Ascending aorta (tissue), 2 donors: ENCODE measurements at regions of chr6 and their contacts with region 1.

Region 1: DNA sequence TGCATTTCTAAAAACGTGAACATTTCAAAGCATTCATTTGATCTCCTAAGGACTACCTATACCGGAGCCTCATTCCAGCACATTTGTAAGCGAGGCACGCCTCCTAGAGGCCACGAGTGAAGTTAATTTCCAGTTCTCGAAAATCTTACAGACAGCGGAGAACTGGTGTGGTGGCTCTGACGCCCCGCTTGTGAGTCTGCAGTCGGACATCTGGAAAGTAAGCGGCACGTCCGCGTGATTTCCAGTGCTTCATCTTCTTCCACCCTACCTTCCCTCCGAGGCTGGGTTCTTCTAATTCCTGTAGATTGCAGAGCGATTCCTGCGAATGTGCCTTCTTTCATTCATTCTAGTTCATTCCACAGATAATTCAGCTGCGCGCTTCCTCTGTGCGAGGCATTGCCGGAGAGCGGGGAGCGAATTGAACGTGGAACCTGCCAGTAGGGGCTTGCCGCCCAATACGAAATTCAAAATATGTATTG is 810 bp upstream of the PRIM2 start:
- DNase-seq: peak; percentile 23 to 93
- H3K4me3 ChIP-seq: peak overlapping the region; percentile 58 to 70
- H3K27ac ChIP-seq: peak overlapping the region; percentile 49 to 89
- H3K4me1 ChIP-seq: peaks cover 3 to 25% of the 10 kb centered on the region in 2 donors
- H3K27me3 ChIP-seq: no peaks in the 10 kb centered on the region
- CTCF ChIP-seq: peak; percentile 61 to 84 (median 82)

Region 2: GRCh38 chr6:56851541-56852259 is 464.9 kb before region 1 on chr6:
- intact Hi-C with region 1: loop called (anchors 5 kb)
- DNase-seq: peak in 1 of 2 donors; percentile 77
- H3K4me3 ChIP-seq: peak overlapping the region; percentile 66 to 73
- H3K27ac ChIP-seq: peak overlapping the region; percentile 67 to 69
- H3K4me1 ChIP-seq: peaks cover 0 to 9% of the 10 kb centered on the region in 2 donors
- H3K27me3 ChIP-seq: no peaks in the 10 kb centered on the region
- CTCF ChIP-seq: peak; percentile 42 to 75 (median 69)

Region 3: GRCh38 chr6:56955171-56956045 is 361.2 kb before region 1 on chr6:
- intact Hi-C with region 1: loop called (anchors 1 kb)
- DNase-seq: peak; percentile 36 to 89
- H3K4me3 ChIP-seq: peak overlapping the region; percentile 61 to 75
- H3K27ac ChIP-seq: peak overlapping the region; percentile 46 to 52
- H3K4me1 ChIP-seq: peaks cover 0 to 3% of the 10 kb centered on the region in 2 donors
- H3K27me3 ChIP-seq: no peaks in the 10 kb centered on the region
- CTCF ChIP-seq: peak; percentile 61 to 80 (median 68)

Region 4: DNA sequence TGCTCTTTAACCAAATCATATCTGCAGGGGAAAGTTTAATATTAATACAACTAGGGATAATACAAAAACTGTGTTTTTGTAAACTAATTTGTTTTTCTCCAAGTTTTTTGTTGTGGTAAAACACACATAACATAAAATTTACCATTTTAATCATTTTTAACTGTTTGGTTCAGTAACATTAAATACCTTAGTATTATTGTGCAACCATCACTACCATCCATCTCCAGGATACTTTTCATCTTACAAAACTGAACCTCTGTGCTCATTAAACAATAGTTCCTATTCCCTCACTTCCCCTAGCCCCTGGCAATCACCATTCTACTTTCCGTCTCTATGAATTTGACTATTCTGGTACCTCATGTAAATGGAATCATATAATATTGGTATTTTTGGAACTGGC is 345.8 kb before region 1 on chr6:
- intact Hi-C with region 1: no loop called
- DNase-seq: no peak
- H3K4me3 ChIP-seq: no peak overlapping the region
- H3K27ac ChIP-seq: no peak overlapping the region
- H3K4me1 ChIP-seq: no peaks in the 10 kb centered on the region
- H3K27me3 ChIP-seq: no peaks in the 10 kb centered on the region
- CTCF ChIP-seq: no peak

Region 5: GRCh38 chr6:57089687-57090460 is 226.7 kb before region 1 on chr6 and contains the start of gene ZNF451:
- intact Hi-C with region 1: loop called (anchors 2 kb)
- DNase-seq: peak; percentile 93 to 99
- H3K4me3 ChIP-seq: peak within 1 kb of the TSS; percentile 68 to 84
- H3K27ac ChIP-seq: peak within 1 kb of the TSS; percentile 79 to 88
- H3K4me1 ChIP-seq: peaks cover 3 to 24% of the 10 kb centered on the region in 2 donors
- H3K27me3 ChIP-seq: no peaks in the 10 kb centered on the region
- CTCF ChIP-seq: no peak
- total RNA-seq, gene ZNF451: 21.5 TPM

Region 6: DNA sequence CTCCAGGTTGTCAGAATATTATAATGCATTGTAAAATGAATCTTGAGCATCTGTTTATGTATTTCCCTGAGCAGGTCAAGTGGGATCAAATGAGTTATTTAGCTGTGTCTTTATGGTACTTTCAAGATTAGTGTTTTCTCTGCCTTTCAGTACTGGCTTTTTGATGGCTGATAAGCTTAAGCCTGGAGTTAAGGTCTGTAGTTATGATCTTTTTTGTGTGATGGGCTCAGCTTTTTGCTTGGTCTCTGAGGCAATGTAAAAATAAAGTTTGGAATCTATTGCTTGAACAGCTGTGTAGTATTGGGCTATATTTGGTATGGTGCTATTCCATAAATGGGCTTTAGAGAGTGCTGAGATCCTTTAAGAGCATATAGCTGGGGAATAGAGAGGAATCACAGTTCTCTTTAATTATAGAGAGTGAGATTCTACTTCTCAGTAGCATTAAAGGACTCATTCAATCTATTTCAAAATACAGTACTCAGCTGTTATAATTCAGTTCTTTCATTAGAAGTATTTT is 185.9 kb before region 1 on chr6:
- intact Hi-C with region 1: no loop called
- DNase-seq: no peak
- H3K4me3 ChIP-seq: no peak overlapping the region
- H3K27ac ChIP-seq: no peak overlapping the region
- H3K4me1 ChIP-seq: peaks cover 0 to 7% of the 10 kb centered on the region in 2 donors
- H3K27me3 ChIP-seq: no peaks in the 10 kb centered on the region
- CTCF ChIP-seq: no peak

Region 7: DNA sequence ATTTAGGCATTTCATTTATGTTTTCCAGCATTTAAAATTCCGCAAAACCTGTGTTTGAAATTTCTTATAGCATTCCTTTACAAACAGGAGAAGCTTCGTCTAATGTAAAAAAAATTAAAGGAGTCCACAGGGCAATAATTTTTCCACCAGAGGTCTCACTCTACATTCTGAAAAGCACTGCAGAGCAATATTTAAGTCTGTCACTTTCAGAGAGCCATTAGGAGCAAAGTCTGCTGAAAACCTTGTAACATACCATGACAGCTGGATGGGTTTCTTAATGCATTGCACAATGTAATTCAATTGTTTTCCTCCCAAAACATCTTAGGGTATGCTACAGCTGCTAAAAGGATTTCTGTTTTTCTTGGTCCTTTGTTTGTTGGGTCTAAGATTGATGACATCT is 126.5 kb before region 1 on chr6:
- intact Hi-C with region 1: loop called (anchors 5 kb)
- DNase-seq: no peak
- H3K4me3 ChIP-seq: no peak overlapping the region
- H3K27ac ChIP-seq: no peak overlapping the region
- H3K4me1 ChIP-seq: no peaks in the 10 kb centered on the region
- H3K27me3 ChIP-seq: no peaks in the 10 kb centered on the region
- CTCF ChIP-seq: peak in 2 of 3 experiments; percentile 28 to 57

Region 8: DNA sequence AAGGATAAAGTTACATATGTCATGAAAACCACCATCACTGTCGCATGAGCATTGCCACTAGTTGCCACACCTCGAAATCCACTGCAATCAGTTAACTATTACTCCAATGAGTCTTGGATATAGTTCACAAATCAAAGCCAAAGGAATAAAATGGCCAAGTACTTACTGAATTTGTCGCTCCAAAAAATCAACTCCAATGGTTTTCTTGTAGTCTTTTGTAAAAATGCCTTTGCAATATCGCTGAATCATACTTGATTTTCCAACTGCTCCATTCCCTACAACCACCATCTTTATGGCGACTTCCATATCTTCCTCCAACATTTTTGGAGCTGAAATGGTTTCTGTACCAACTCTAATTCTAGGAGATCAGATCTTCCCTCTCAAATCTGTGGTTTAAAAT is 106.6 kb before region 1 on chr6:
- intact Hi-C with region 1: no loop called
- DNase-seq: no peak
- H3K4me3 ChIP-seq: no peak overlapping the region
- H3K27ac ChIP-seq: no peak overlapping the region
- H3K4me1 ChIP-seq: peaks cover 0 to 4% of the 10 kb centered on the region in 2 donors
- H3K27me3 ChIP-seq: no peaks in the 10 kb centered on the region
- CTCF ChIP-seq: no peak

Region 9: DNA sequence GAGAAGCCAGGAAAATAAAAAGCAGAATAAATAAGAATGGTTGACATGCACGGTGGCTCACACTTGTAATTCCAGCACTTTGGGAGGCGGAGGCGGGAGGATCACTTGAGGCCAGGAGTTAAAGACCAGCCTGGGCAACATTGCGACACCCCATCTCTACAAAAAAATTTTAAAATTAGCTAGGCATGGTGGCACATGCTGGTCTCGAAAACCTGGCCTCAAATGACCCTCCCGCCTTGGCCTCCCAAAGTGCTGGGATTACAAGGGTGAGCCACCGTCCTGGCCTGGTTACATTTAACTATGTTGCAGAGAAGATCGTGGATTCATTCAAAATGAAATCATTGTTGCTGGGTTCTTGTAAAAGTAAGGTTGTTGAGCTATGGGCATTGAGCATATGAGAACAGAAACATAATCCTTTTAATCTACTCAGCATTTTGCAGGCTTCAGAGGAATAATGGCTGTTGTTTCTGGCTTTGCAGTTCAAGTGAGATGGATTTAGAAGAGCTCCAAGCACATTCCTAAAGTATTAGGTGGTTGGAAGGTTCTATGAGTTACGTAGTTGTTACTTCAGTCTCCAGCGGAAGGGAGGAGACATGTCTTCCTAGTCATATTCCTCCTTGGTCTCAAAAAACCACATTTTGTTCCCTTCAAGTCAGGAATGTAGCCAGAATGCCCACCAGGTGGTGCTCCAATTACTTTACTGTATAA is 48.9 kb before region 1 on chr6:
- intact Hi-C with region 1: loop called (anchors 1 kb)
- DNase-seq: peak in 1 of 2 donors; percentile 90
- H3K4me3 ChIP-seq: no peak overlapping the region
- H3K27ac ChIP-seq: peak overlapping the region; percentile 48 to 60
- H3K4me1 ChIP-seq: peaks cover 11 to 30% of the 10 kb centered on the region in 2 donors
- H3K27me3 ChIP-seq: no peaks in the 10 kb centered on the region
- CTCF ChIP-seq: peak; percentile 35 to 56 (median 52)